ENCODE measurements at regions of chr11 and their contacts with region 1.

Region 1: GRCh38 chr11:133961890-133962289 is 5.1 kb upstream of the IGSF9B start:
- DNase-seq: no peak

Region 2: DNA sequence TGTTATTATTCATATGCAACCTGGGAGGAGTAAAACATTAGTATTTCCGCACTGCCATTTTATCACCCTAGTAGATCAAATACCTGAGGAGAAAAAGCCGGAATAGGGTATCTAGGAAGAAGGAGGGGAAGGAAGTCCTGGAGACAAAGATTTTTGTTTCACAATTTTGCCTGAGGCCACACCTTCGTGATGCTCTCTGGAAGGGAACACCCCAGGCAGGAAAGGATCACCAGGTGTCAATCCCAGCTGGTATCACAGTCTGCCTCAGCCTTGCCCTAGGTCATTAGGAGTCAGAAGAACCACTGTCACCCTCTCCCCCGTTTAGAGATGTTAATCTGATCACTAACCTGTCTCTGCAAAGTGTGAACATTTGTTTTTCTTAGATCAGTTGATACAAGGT is 30.2 kb after region 1 on chr11:
- intact Hi-C with region 1: loop called (anchors 2 kb)
- DNase-seq: no peak